ENCODE measurements at regions of chr20 and their contacts with region 1.

Region 1: GRCh38 chr20:41232973-41233926 is 84.3 kb downstream of the ZHX3 start:
- DNase-seq: no peak
- ATAC-seq: no peak
- H3K4me3 Mint-ChIP-seq: no peak overlapping the region
- H3K27ac Mint-ChIP-seq: peak overlapping the region; percentile 13
- H3K4me1 Mint-ChIP-seq: peaks cover 42% of the 10 kb centered on the region
- H3K27me3 Mint-ChIP-seq: no peaks in the 10 kb centered on the region
- CTCF ChIP-seq: no peak

Region 2: GRCh38 chr20:40962730-40963504 is 270.3 kb before region 1 on chr20:
- CTCF ChIA-PET with region 1: interaction called, 10 read pairs
- POLR2A ChIA-PET with region 1: no interaction called
- intact Hi-C with region 1: loop called (anchors 5 kb)
- DNase-seq: peak; percentile 78
- ATAC-seq: peak; percentile 89
- H3K4me3 Mint-ChIP-seq: no peak overlapping the region
- H3K27ac Mint-ChIP-seq: no peak overlapping the region
- H3K4me1 Mint-ChIP-seq: peaks cover 8% of the 10 kb centered on the region
- H3K27me3 Mint-ChIP-seq: no peaks in the 10 kb centered on the region
- CTCF ChIP-seq: peak; percentile 96

Region 3: DNA sequence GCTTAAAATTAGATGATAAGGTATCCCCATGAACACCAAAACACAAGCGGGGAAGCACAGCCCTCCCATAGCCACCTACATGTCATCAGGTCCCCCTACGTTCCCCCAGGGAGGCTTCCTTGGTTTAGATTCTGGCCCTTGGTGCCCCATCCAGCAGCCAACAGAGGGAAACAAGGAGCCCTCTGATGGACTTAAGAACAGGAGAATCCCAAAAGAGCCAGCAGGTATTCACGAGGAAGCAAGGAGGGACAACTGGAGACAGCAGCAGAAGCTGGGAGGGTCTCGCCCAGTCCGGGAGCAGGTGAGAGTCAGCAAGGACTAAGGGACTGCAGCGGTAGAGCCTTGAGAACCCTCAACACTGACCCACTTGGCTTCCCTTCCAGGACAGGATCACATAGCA is 263.0 kb before region 1 on chr20:
- CTCF ChIA-PET with region 1: interaction called, 10 read pairs
- POLR2A ChIA-PET with region 1: no interaction called
- intact Hi-C with region 1: loop called (anchors 5 kb)
- DNase-seq: no peak
- ATAC-seq: no peak
- H3K4me3 Mint-ChIP-seq: no peak overlapping the region
- H3K27ac Mint-ChIP-seq: no peak overlapping the region
- H3K4me1 Mint-ChIP-seq: peaks cover 11% of the 10 kb centered on the region
- H3K27me3 Mint-ChIP-seq: peaks cover 8% of the 10 kb centered on the region
- CTCF ChIP-seq: no peak

Region 4: GRCh38 chr20:41173161-41173721 is 60.0 kb before region 1 on chr20:
- CTCF ChIA-PET with region 1: interaction called, 29 read pairs
- POLR2A ChIA-PET with region 1: no interaction called
- intact Hi-C with region 1: loop called (anchors 10 kb)
- DNase-seq: peak; percentile 75
- ATAC-seq: peak; percentile 74
- H3K4me3 Mint-ChIP-seq: no peak overlapping the region
- H3K27ac Mint-ChIP-seq: peak overlapping the region; percentile 56
- H3K4me1 Mint-ChIP-seq: peaks cover 25% of the 10 kb centered on the region
- H3K27me3 Mint-ChIP-seq: no peaks in the 10 kb centered on the region
- CTCF ChIP-seq: peak; percentile 83

Region 5: DNA sequence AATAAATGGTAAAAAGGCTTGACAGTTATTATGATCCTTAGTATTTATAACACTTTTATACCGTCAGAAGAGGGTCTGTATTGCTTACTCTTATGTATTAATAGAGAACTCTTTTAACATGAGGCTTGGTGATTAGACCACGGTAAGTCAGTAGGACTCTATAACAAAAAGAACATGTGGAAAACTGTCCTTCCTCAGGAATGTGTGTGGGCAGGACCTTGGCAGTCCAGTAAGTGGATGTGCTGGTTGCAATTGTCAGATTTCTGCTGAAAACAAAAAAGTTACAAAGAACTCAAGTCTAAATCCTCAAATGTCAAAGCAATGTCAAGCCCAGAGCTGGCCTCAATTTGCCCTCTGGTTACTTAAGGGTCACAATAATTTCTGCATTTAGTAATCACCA is 14.8 kb before region 1 on chr20:
- CTCF ChIA-PET with region 1: interaction called, 22 read pairs
- POLR2A ChIA-PET with region 1: no interaction called
- intact Hi-C with region 1: no loop called
- DNase-seq: no peak
- ATAC-seq: no peak
- H3K4me3 Mint-ChIP-seq: no peak overlapping the region
- H3K27ac Mint-ChIP-seq: no peak overlapping the region
- H3K4me1 Mint-ChIP-seq: peaks cover 7% of the 10 kb centered on the region
- H3K27me3 Mint-ChIP-seq: no peaks in the 10 kb centered on the region
- CTCF ChIP-seq: no peak

Region 6: DNA sequence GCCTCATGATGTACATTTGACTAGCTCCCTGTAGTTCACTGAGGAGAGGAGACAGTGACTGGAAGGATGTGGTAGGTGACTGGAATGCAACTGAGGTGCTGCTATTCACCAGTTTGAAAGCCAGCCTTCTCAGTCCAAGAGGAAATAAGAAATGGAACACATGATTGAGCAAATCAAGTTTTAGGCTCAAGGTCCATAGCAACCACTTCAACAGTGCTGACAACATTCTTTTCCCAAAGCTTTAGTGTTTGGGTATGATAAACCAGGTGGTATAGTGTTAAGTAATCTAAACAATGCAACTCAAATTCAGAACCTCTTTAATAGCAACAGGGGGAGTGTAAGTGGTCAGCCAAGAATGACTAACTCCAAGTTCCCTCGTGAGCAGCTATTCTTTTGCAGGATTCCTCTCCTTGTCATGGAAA is 75.1 kb after region 1 on chr20:
- CTCF ChIA-PET with region 1: no interaction called
- POLR2A ChIA-PET with region 1: no interaction called
- intact Hi-C with region 1: no loop called
- DNase-seq: no peak
- ATAC-seq: no peak
- H3K4me3 Mint-ChIP-seq: no peak overlapping the region
- H3K27ac Mint-ChIP-seq: no peak overlapping the region
- H3K4me1 Mint-ChIP-seq: peaks cover 16% of the 10 kb centered on the region
- H3K27me3 Mint-ChIP-seq: no peaks in the 10 kb centered on the region
- CTCF ChIP-seq: no peak

Measured in activated CD8-positive, alpha-beta T cell treated with anti-CD3 and anti-CD28 coated beads for 36 hours (primary cell).